ENCODE measurements at regions of chr5 and their contacts with region 1.

Region 1: DNA sequence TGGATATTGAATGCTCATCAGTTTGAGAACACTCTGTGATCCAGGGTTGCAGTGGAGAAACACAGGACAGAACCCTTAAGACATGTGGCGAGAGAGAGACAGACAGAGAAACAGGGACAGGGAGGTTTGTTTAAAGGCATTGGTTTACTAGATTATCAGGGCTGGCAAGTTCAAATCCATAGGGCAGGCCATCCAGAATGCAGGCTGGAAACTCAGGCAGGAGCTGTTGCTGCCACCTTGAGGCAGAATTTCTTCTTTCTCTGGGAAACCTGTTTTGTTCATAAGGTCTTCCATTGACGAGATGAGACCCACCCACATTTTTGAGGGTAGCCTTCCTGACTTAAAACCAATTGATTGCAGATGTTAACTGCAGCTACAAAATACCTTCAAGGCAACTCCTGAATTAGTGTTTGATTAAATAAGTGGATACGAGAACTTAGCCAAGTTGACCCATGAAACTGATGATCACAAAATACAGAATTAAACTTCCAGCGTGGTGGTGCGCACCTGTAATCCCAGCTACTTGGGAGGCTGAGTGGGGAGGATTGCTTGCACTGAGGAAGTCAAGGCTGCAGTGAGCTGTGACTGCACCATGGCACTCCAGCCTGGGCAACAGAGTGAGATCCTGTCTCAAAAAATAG is 55.9 kb downstream of the NSUN2 start:
- DNase-seq: peak in 1 of 2 donors; percentile 49
- ATAC-seq: peak; percentile 32 to 73 (median 56)
- H3K4me3 ChIP-seq: no peak overlapping the region
- H3K27ac ChIP-seq: peak overlapping the region; percentile 48
- H3K4me1 ChIP-seq: peaks cover 6% of the 10 kb centered on the region
- H3K27me3 ChIP-seq: no peaks in the 10 kb centered on the region
- CTCF ChIP-seq: peak; percentile 60

Region 2: DNA sequence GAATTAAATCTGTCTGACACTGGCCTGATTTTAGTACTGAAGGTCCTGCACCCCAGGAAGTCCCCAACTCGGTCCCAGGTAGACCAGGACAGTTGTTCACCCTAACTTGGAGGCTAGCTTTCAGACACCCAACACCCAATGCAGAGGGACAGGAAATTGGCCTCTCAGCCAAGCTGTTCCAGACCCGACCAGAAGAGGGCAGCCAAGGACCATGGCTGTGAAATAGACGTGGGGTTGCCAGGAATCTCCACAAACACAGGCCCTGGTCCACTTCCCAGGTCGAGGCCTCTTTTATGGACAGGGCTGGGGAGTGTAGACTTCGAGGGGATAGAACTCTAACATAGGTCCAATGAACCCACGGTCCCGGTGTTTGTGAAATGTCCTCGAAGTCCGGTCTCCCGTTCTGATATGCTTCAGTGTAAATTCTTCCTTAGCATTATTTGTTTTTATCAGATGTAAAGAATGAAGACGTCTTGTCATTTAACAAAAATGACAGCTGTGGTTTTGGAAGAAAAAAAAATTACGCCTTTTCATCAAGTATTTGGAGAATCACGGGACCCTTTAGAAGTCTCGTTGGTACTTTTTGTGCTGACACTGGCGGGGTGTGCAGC is 1697.2 kb before region 1 on chr5:
- intact Hi-C with region 1: loop called in 1 of 2 experiments (anchors 5 kb)
- DNase-seq: peak; percentile 70 to 81
- ATAC-seq: peak; percentile 88 to 93 (median 90)
- H3K4me3 ChIP-seq: no peak overlapping the region
- H3K27ac ChIP-seq: no peak overlapping the region
- H3K4me1 ChIP-seq: no peaks in the 10 kb centered on the region
- H3K27me3 ChIP-seq: no peaks in the 10 kb centered on the region
- CTCF ChIP-seq: peak; percentile 92

Region 3: DNA sequence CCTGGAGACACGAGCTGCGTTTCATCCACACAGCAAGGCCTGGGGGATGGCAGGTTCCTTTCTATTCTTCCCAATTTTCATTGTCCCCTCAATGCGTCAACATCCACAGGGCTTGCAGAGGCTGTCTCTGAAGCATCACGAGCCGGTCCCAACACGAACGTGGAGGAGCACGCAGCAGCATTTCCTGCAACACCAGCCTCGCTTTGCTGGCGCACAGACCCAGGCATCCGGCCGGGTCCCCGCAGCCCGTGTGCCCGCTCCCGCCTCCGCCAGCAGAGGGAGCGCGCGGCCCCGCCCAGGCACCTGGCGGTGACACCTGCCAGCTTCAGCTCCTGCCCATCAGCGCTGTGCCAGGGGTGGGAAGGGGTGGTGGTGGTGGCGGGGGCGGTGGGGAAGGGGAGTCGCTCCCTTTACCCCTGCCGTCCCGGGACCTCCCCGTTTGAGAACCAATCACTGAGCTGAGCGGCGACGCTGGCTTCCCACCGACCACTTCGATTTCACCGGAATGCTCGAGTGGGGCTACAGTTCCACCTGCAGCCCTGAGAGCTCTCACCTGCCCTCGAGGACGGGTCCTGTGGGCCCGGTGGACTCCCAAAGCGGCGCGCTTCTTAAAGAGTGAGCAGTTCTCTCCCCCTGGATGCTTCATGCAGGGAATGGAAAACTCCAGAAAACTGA is 690.0 kb before region 1 on chr5:
- intact Hi-C with region 1: loop called (anchors 5 to 10 kb)
- DNase-seq: peak; percentile 22 to 60
- ATAC-seq: peak; percentile 74 to 92 (median 79)
- H3K4me3 ChIP-seq: peak overlapping the region; percentile 30
- H3K27ac ChIP-seq: no peak overlapping the region
- H3K4me1 ChIP-seq: no peaks in the 10 kb centered on the region
- H3K27me3 ChIP-seq: no peaks in the 10 kb centered on the region
- CTCF ChIP-seq: peak; percentile 66

Region 4: DNA sequence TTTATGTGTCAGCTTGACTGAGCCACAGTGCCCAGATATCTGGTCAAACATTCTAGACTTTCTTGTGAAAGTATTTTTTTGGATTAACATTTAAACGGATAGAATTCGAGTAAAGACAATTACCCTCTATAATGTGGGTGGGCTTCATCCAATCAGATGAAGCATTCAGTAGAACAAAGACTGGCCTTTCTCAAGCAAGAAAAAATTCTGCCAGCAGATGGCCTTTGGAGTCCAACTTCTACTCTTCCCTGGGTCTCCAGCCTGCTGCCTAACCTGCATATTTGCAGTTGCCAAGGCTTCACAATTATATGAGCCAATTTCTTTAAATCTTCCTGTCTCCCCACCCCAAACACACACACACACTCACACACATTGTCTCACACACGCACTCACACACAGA is 285.0 kb before region 1 on chr5:
- intact Hi-C with region 1: loop called in 1 of 2 experiments (anchors 10 kb)
- DNase-seq: no peak
- ATAC-seq: no peak
- H3K4me3 ChIP-seq: no peak overlapping the region
- H3K27ac ChIP-seq: no peak overlapping the region
- H3K4me1 ChIP-seq: no peaks in the 10 kb centered on the region
- H3K27me3 ChIP-seq: no peaks in the 10 kb centered on the region
- CTCF ChIP-seq: peak; percentile 30

Region 5: GRCh38 chr5:6551287-6551954 is 25.6 kb before region 1 on chr5:
- intact Hi-C with region 1: loop called in 1 of 2 experiments (anchors 2 kb)
- DNase-seq: peak; percentile 83 to 95
- ATAC-seq: peak; percentile 94 to 97 (median 97)
- H3K4me3 ChIP-seq: peak overlapping the region; percentile 25
- H3K27ac ChIP-seq: peak overlapping the region; percentile 86
- H3K4me1 ChIP-seq: peaks cover 21% of the 10 kb centered on the region
- H3K27me3 ChIP-seq: no peaks in the 10 kb centered on the region
- CTCF ChIP-seq: no peak